HepG2 (cell line): ENCODE measurements at regions of chr10 and their contacts with region 1.

Region 1: DNA sequence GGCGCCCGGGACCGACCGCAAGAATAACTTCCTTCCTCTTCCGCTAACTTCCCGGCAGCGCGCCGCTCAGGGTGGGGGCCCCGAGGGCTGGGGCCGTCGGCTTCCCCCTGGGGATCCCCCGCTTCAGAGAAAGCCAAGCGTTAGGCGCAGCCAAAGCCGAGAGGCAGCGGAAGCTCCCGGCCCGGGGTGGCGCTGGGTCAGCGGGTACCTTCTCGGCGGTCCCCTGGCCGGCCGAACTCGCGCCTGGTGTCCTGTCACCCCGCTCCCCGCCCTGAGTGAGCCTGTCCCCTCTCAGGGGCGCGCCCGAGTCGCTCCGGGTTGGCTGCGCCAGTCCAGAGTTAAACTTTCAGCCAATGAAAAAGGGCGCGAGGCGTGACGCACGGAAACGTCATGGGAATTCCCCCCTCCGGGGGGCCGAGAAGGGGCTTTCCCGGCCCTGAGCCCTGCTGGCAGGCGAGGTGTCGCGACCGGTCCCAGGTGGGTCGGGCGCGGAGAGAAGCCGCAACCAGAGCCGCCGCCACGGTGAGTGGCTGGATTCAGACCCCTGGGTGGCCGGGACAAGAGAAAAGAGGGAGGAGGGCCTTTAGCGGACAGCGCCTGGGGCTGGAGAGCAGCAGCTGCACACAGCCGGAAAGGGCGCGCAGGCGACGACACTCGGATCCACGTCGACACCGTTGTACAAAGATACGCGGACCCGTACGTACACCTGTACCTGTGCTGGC is 1.3 kb upstream of the NFKB2 start:
- DNase-seq: peak; percentile 85
- ATAC-seq: peak; percentile 90
- H3K4me3 ChIP-seq: peak overlapping the region; percentile 69 to 82 (median 79)
- H3K27ac ChIP-seq: peak overlapping the region; percentile 66
- H3K4me1 ChIP-seq: peaks cover 44% of the 10 kb centered on the region
- H3K27me3 ChIP-seq: peaks cover 0 to 11% of the 10 kb centered on the region in 2 experiments; a peak in 2 of 5 replicates
- CTCF ChIP-seq: peak; percentile 91
- EP300 ChIP-seq: no peak
- POLR2A ChIP-seq: peak in 1 of 2 experiments; percentile 51; a peak in 2 of 4 replicates
- RAD21 ChIP-seq: peak; percentile 93

Region 2: DNA sequence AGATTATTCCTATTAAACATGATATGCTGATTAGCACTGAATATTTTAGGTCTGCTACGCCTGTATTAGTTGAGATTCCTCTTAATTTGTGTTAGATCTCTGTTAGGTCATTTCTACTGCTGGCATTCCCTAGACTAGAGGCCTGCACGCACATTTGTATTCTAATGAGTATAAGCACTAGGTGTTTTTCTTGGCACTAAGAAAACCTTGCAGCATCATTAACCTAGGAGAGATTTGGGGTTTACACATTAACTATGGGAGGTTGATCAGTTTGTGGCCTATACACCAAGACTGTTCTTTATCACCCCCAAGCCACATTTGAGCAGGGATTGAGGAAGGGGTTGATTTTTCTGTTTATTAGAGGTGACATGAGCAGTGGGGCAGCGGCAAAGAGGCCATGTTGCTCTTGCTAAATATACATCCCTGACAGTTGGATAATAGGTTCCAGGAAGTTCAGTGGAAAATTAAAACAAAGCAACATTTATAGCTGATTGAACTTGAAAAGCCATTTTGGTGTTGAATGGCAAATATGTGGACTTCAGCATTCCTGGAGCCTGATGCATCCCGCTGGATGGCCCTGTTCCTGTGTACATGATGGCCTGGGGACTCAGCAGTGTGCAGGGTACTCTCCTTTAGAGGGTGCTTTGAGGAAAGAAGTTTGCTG is 83.7 kb before region 1 on chr10:
- CTCF ChIA-PET with region 1: no interaction called
- POLR2A ChIA-PET with region 1: no interaction called
- in situ Hi-C with region 1: no loop called
- intact Hi-C with region 1: no loop called
- DNase-seq: peak; percentile 76
- ATAC-seq: peak; percentile 97
- H3K4me3 ChIP-seq: no peak overlapping the region
- H3K27ac ChIP-seq: peak overlapping the region; percentile 48
- H3K4me1 ChIP-seq: peaks cover 27% of the 10 kb centered on the region
- H3K27me3 ChIP-seq: no peaks in the 10 kb centered on the region; a peak in 1 of 5 replicates
- CTCF ChIP-seq: no peak
- EP300 ChIP-seq: peak in 1 of 2 experiments; percentile 19; a peak in 1 of 4 replicates
- POLR2A ChIP-seq: no peak
- RAD21 ChIP-seq: no peak

Region 3: DNA sequence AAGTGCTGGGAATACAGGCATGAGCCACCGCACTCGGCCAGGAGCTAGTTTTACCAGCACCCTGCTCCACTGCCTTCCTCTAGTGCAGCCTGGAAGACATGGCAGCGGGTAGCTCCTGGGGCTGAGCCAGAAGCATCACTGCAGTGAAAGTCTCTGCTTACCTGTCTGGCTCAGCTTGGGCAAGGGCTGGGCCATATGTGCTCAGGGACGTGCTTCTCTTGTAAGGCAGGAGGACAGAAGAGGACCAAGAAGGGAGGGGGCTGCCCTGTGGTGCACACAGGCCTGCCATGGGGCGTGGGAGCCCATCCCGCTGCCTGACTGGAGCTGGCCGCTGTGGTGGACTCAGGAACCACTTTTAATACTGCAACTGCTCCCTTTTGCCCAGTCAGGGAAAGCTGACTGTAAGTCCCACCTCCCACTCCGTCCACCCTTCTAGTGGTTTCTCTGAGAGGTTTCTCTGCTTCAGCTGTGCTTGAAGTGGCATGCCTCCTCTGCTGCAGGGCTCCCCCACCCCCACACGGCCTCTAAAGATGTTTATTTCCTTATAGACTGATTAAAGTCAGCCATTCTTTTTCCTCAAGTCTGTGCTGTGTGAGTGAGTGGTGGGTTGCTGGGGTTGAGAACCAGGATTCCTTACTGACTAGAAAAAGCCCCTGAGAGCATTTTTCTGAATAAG is 82.4 kb after region 1 on chr10:
- CTCF ChIA-PET with region 1: interaction called, 11 read pairs
- POLR2A ChIA-PET with region 1: no interaction called
- in situ Hi-C with region 1: no loop called
- intact Hi-C with region 1: loop called (anchors 1 kb)
- DNase-seq: no peak
- ATAC-seq: no peak
- H3K4me3 ChIP-seq: no peak overlapping the region
- H3K27ac ChIP-seq: no peak overlapping the region
- H3K4me1 ChIP-seq: no peaks in the 10 kb centered on the region
- H3K27me3 ChIP-seq: no peaks in the 10 kb centered on the region
- CTCF ChIP-seq: no peak
- EP300 ChIP-seq: no peak
- POLR2A ChIP-seq: no peak
- RAD21 ChIP-seq: no peak